A549 (cell line): ENCODE measurements at regions of chr1 and their contacts with region 1.

Region 1: DNA sequence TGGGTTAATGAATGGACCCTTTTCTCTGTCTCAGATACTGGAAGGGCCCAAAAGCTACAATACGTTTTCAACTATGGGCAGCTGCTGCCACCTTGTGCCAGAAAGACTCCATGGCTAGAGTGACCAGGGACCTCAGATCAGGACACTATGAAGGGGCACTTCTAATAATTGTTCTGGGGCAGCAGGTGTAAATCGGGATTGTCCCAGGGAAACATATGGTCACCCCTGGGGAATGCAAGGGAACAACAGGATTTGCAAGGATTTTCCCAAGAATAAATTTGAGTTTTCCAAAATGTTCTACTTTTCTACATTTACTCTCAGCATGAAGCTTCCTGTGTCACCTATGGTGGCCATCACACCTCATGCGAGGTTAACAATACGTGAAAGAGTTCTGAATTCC is 12.0 kb upstream of the FCAMR start:
- DNase-seq: peak; percentile 57 to 73
- ATAC-seq: peak; percentile 96 to 97
- H3K4me3 ChIP-seq: no peak overlapping the region
- H3K27ac ChIP-seq: no peak overlapping the region
- H3K4me1 ChIP-seq: no peaks in the 10 kb centered on the region; the same call in 2 of the 3 replicates
- CTCF ChIP-seq: peak; percentile 92
- EP300 ChIP-seq: no peak
- POLR2A ChIP-seq: no peak
- RAD21 ChIP-seq: peak; percentile 92

Region 2: GRCh38 chr1:206479183-206480125 is 502.8 kb before region 1 on chr1:
- CTCF ChIA-PET with region 1: interaction called, 17 read pairs
- POLR2A ChIA-PET with region 1: no interaction called
- DNase-seq: peak; percentile 74 to 91
- ATAC-seq: peak; percentile 70 to 86
- H3K4me3 ChIP-seq: no peak overlapping the region
- H3K27ac ChIP-seq: no peak overlapping the region
- H3K4me1 ChIP-seq: peaks cover 11% of the 10 kb centered on the region
- CTCF ChIP-seq: peak; percentile 80
- EP300 ChIP-seq: no peak
- POLR2A ChIP-seq: no peak
- RAD21 ChIP-seq: peak; percentile 72 to 75

Region 3: DNA sequence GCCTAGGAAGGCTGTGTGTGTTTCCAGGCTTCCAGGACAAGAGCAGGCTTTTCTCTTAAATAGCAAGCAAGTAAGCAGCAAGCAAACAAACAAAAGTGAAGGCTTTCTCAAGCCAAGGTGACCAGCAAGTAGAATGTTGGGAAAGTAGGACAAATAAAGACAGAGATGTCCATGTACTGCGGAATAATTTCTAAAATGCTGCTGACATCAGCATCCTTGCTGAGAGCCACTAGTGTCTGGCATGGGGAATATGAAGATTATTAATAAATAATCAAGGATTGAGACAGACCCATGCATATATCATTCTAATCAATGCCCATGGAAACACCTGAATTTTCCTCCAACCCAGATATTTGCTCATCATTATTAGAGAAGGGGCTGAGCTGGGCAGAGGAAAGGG is 353.3 kb before region 1 on chr1:
- CTCF ChIA-PET with region 1: interaction called, 34 read pairs
- POLR2A ChIA-PET with region 1: no interaction called
- DNase-seq: no peak
- ATAC-seq: no peak
- H3K4me3 ChIP-seq: no peak overlapping the region
- H3K27ac ChIP-seq: no peak overlapping the region
- H3K4me1 ChIP-seq: peaks cover 4% of the 10 kb centered on the region; the same call in 1 of the 3 replicates
- CTCF ChIP-seq: no peak
- EP300 ChIP-seq: no peak
- POLR2A ChIP-seq: no peak
- RAD21 ChIP-seq: no peak

Region 4: DNA sequence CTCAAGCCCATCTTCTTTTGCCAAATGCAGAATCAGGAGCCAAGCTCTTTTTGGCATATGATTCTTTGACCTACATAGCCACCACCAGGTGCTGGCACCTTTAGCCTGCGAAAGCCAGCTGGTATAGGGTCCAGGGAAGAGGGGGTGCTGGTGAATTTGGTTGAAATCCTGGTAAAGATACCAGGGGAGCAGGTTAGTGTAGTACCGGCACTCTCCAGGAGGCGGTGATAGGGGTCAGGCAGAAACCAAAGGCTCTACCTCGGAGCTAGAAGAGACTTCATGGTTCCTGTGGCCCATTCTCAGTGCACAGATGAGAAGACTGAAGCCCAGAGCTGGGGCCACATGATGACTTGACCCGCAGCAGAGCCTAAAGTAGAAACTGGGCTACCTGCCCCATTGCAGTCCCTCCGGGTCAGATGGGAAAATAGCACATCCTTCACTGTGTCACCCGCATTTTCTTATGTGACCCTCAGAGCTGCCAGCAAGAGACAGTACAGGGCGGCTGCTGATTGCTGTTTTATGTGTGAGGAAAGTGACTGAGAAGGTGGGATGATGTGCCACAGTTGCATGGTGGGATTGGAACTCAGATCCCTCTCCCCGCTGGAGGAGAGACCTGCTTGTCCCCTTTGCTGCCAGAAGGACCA is 247.6 kb before region 1 on chr1:
- CTCF ChIA-PET with region 1: interaction called, 47 read pairs
- POLR2A ChIA-PET with region 1: no interaction called
- DNase-seq: peak; percentile 43 to 78
- ATAC-seq: peak; percentile 60 to 84; a peak in 4 of 6 replicates
- H3K4me3 ChIP-seq: no peak overlapping the region
- H3K27ac ChIP-seq: no peak overlapping the region
- H3K4me1 ChIP-seq: peaks cover 6% of the 10 kb centered on the region; the same call in 1 of the 3 replicates
- CTCF ChIP-seq: peak; percentile 65
- EP300 ChIP-seq: no peak
- POLR2A ChIP-seq: no peak
- RAD21 ChIP-seq: peak; percentile 73 to 75

Region 5: DNA sequence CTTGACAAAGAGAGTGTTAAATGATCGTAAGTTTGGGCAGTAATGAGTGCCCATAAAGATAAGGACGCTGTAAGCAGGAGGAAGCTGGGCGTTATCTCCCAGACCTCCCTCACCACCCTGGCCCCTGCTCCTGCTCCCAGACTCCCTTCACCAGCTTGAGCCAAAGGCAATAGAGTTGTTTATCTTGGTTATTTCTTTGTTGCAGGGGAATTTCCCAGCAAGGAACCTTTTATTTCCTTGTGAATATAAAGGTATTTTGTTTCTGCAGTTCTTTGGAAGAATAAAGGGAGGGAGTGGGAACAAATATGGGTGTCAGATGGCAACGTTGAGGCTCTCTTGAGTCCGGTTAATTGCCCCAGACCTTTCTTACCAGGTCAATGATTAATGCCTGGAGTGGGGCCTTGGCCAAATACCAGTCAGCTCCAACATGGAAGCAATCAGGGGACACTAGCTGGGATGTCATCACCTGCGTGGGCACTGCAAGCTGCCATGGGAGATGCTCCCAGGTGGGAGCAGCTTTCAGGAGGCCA is 40.3 kb before region 1 on chr1:
- CTCF ChIA-PET with region 1: interaction called, 63 read pairs
- POLR2A ChIA-PET with region 1: no interaction called
- DNase-seq: no peak
- ATAC-seq: no peak
- H3K4me3 ChIP-seq: no peak overlapping the region
- H3K27ac ChIP-seq: no peak overlapping the region
- H3K4me1 ChIP-seq: peaks cover 5% of the 10 kb centered on the region; the same call in 1 of the 3 replicates
- CTCF ChIP-seq: no peak
- EP300 ChIP-seq: no peak
- POLR2A ChIP-seq: no peak
- RAD21 ChIP-seq: no peak

Region 6: GRCh38 chr1:206998816-206999215 is 16.6 kb after region 1 on chr1:
- CTCF ChIA-PET with region 1: interaction called, 21 read pairs
- POLR2A ChIA-PET with region 1: no interaction called
- DNase-seq: no peak
- ATAC-seq: no peak
- H3K4me3 ChIP-seq: no peak overlapping the region
- H3K27ac ChIP-seq: no peak overlapping the region
- H3K4me1 ChIP-seq: peaks cover 14% of the 10 kb centered on the region
- CTCF ChIP-seq: no peak
- EP300 ChIP-seq: no peak
- POLR2A ChIP-seq: no peak
- RAD21 ChIP-seq: no peak

Region 7: DNA sequence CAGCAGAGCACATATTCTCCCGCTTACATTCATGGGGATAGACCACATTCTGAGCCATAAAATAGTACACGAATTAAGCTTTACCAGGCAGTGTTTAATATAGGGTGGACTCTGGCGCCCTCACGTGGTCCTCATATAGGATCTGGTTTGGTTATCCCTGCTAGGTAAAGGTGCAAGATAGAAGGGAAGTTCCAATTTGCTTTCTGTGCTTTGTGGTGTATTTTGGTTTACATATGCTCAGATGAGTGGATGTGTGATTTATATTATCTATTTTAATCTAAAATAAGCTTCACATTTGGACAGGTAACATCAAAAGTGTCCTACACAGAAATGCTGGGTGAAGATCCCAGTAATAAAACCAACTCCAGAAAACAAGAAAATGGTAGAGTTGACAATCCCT is 517.4 kb after region 1 on chr1:
- CTCF ChIA-PET with region 1: interaction called, 10 read pairs
- POLR2A ChIA-PET with region 1: no interaction called
- DNase-seq: peak; percentile 55 to 69
- ATAC-seq: peak; percentile 89 to 92
- H3K4me3 ChIP-seq: no peak overlapping the region
- H3K27ac ChIP-seq: no peak overlapping the region
- H3K4me1 ChIP-seq: no peaks in the 10 kb centered on the region
- CTCF ChIP-seq: peak; percentile 92
- EP300 ChIP-seq: no peak
- POLR2A ChIP-seq: no peak
- RAD21 ChIP-seq: peak; percentile 92 to 95